ENCODE measurements at regions of chr16 and their contacts with region 1.

Region 1: DNA sequence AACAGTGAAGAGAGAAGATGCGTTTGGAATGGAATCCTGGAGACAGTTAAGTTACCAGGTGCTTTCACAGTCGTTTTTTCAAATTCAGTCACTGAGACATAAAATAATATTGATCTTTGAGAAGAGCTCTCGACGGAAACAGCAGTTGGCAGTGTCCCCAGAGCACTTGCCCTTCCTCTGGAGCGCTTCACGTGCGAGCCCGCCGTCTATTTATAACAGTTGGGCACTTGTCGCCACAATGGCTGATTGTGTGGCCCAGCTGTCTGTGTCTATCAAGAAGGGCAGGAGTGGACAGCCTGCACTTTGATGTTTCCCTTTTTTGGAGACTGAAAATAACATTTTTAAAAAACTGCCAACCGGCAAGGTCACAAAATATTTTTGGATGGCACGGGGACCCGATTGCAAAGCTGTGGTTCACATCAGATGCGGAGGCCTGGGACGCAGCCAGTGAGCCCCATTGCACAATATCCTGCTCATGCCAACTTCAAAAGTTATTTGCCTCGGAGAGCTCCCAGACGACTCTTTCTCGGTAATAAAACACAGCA is 62.9 kb downstream of the ADCY9 start:
- DNase-seq: peak; percentile 94 to 97
- ATAC-seq: peak; percentile 85 to 88
- H3K4me3 ChIP-seq: peak overlapping the region; percentile 8 to 47 (median 42)
- H3K27ac ChIP-seq: peak overlapping the region; percentile 87 to 98 (median 90)
- H3K4me1 ChIP-seq: peaks cover 37 to 52% of the 10 kb centered on the region in 2 donors
- H3K27me3 ChIP-seq: no peaks in the 10 kb centered on the region
- CTCF ChIP-seq: no peak
- POLR2A ChIP-seq: peak in 1 of 2 donors; percentile 48

Region 2: DNA sequence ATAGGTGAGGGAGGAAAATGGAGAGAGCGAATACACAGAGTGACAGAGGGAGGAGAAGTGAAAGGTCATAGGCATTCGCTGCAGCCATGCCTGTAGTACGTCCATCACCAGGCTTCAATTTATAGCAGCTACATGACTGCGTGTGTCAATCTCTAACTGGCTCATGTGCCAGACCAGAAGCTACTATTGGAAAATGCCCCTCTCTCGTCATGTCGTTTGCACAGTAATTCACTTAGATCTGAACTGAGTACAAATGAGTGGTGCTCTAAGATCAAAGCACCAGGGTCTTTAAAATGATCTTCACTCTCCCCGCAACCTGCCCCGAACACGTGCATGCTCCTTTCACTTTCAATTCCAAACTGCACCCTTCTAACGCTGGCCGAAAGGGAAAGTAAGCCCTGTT is 11.6 kb after region 1 on chr16:
- in situ Hi-C with region 1: no loop called
- intact Hi-C with region 1: no loop called
- DNase-seq: no peak
- ATAC-seq: no peak
- H3K4me3 ChIP-seq: peak overlapping the region in 2 of 4 donors; percentile 5 to 30
- H3K27ac ChIP-seq: peak overlapping the region in 2 of 4 donors; percentile 18 to 37
- H3K4me1 ChIP-seq: peaks cover 9 to 15% of the 10 kb centered on the region in 2 donors
- H3K27me3 ChIP-seq: no peaks in the 10 kb centered on the region
- CTCF ChIP-seq: no peak
- POLR2A ChIP-seq: no peak

Region 3: GRCh38 chr16:4271176-4272066 is 218.0 kb after region 1 on chr16:
- in situ Hi-C with region 1: no loop called
- intact Hi-C with region 1: loop called (anchors 5 kb)
- DNase-seq: peak; percentile 92 to 93
- ATAC-seq: peak; percentile 85
- H3K4me3 ChIP-seq: peak overlapping the region; percentile 88 to 98 (median 90)
- H3K27ac ChIP-seq: peak overlapping the region; percentile 90 to 98 (median 96)
- H3K4me1 ChIP-seq: peaks cover 14 to 27% of the 10 kb centered on the region in 2 donors
- H3K27me3 ChIP-seq: no peaks in the 10 kb centered on the region
- CTCF ChIP-seq: peak in 2 of 5 experiments; percentile 22 to 49
- POLR2A ChIP-seq: peak; percentile 86 to 92

Measured in gastrocnemius medialis (tissue), 4 donors.